ENCODE measurements at regions of chr13 and their contacts with region 1.

Region 1: DNA sequence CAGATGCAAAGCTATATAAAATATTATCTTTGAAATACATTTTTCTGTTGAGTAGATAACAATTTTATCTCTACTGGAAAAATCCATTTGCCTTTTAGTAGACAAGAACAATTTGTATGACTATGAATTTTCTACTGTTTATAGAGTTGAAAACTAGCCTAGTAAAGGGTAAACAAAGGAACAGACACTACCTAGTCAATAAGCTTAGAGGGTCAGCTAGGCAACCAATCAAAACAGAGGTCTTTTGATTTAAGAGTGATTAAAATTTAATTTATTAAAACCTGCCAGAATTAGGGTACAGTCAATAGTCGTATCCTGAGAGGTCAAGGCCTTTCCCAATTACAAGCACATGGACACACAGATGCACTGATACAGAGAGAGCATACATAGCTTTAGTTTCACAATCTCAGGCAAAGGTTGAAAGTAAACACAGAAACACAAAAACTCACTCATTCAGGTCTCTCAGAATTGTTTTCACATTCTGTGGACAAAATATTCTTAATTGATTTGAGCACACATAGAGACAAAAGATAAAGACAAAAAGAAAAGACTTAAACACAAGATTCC is 24.5 kb upstream of the GPC6 start:
- DNase-seq: no peak
- ATAC-seq: no peak
- H3K4me3 ChIP-seq: no peak overlapping the region
- H3K4me3 Mint-ChIP-seq: no peak overlapping the region
- H3K27ac ChIP-seq: no peak overlapping the region
- H3K27ac Mint-ChIP-seq: no peak overlapping the region
- H3K4me1 ChIP-seq: no peaks in the 10 kb centered on the region
- H3K4me1 Mint-ChIP-seq: no peaks in the 10 kb centered on the region
- H3K27me3 ChIP-seq: no peaks in the 10 kb centered on the region
- H3K27me3 Mint-ChIP-seq: no peaks in the 10 kb centered on the region
- CTCF ChIP-seq: no peak

Region 2: DNA sequence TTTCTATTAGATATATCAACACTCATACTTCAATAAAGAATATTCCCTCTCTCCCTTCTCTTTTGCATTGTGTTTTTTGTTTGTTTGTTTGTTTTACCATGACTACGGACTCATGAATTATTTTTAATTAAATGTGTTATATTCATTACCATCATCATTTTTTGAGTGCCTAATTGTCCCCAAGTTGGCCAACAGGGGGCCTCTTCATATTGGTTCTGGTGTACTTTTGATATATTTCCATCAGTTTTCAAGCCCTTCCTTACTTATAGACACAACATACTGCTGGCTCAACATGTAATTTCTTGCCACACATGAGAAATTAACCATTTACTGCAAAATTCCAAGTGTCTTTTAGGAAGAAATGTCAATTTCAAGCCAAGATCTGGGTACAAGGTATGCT is 30.0 kb before region 1 on chr13:
- CTCF ChIA-PET with region 1: no interaction called
- POLR2A ChIA-PET with region 1: no interaction called
- intact Hi-C with region 1: loop called in 1 of 2 experiments (anchors 1 kb)
- DNase-seq: no peak
- ATAC-seq: no peak
- H3K4me3 ChIP-seq: no peak overlapping the region
- H3K4me3 Mint-ChIP-seq: no peak overlapping the region
- H3K27ac ChIP-seq: no peak overlapping the region
- H3K27ac Mint-ChIP-seq: no peak overlapping the region
- H3K4me1 ChIP-seq: no peaks in the 10 kb centered on the region
- H3K4me1 Mint-ChIP-seq: no peaks in the 10 kb centered on the region
- H3K27me3 ChIP-seq: no peaks in the 10 kb centered on the region
- H3K27me3 Mint-ChIP-seq: no peaks in the 10 kb centered on the region
- CTCF ChIP-seq: no peak

Measured in CD4-positive, alpha-beta T cell (primary cell).